ENCODE measurements at regions of chr19 and their contacts with region 1.

Region 1: GRCh38 chr19:38204096-38204495 is 19.9 kb downstream of the DPF1 start:
- DNase-seq: no peak
- ATAC-seq: no peak
- H3K4me3 ChIP-seq: no peak overlapping the region
- H3K4me3 Mint-ChIP-seq: no peak overlapping the region
- H3K27ac ChIP-seq: no peak overlapping the region
- H3K27ac Mint-ChIP-seq: no peak overlapping the region
- H3K4me1 ChIP-seq: no peaks in the 10 kb centered on the region
- H3K4me1 Mint-ChIP-seq: peaks cover 5 to 6% of the 10 kb centered on the region in 2 donors
- H3K27me3 ChIP-seq: peaks cover 6% of the 10 kb centered on the region
- H3K27me3 Mint-ChIP-seq: peaks cover 7 to 9% of the 10 kb centered on the region in 2 donors
- CTCF ChIP-seq: no peak

Region 2: GRCh38 chr19:37864501-37864900 is 339.6 kb before region 1 on chr19:
- intact Hi-C with region 1: no loop called
- DNase-seq: no peak
- ATAC-seq: no peak
- H3K4me3 ChIP-seq: no peak overlapping the region
- H3K4me3 Mint-ChIP-seq: no peak overlapping the region
- H3K27ac ChIP-seq: no peak overlapping the region
- H3K27ac Mint-ChIP-seq: no peak overlapping the region
- H3K4me1 ChIP-seq: no peaks in the 10 kb centered on the region
- H3K4me1 Mint-ChIP-seq: no peaks in the 10 kb centered on the region
- H3K27me3 ChIP-seq: peaks cover 2% of the 10 kb centered on the region
- H3K27me3 Mint-ChIP-seq: peaks cover 0 to 6% of the 10 kb centered on the region in 2 donors
- CTCF ChIP-seq: no peak

Region 3: DNA sequence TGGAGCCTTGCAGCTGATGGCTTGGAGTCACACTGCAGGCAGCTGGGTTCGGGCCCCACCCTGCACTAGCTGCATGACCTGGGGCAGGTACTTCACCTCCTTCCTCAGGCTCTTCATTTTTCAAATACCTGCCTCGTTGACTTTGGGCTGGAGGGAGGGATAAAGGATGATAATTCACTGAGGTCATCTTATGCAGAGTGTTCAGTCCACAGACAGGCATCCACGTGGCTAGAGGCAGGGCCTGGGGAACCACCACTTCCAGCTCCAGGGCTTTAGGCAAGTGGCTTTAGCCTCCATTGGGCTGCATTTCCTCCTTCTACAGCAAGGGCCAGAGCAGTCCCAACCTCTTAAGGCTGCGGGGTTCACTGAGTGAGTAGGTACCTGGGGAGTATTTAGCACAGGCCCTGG is 212.3 kb before region 1 on chr19:
- intact Hi-C with region 1: loop called (anchors 5 kb)
- DNase-seq: no peak
- ATAC-seq: no peak
- H3K4me3 ChIP-seq: no peak overlapping the region
- H3K4me3 Mint-ChIP-seq: no peak overlapping the region
- H3K27ac ChIP-seq: no peak overlapping the region
- H3K27ac Mint-ChIP-seq: no peak overlapping the region
- H3K4me1 ChIP-seq: peaks cover under 1% of the 10 kb centered on the region
- H3K4me1 Mint-ChIP-seq: peaks cover 16 to 32% of the 10 kb centered on the region in 2 donors
- H3K27me3 ChIP-seq: no peaks in the 10 kb centered on the region
- H3K27me3 Mint-ChIP-seq: no peaks in the 10 kb centered on the region
- CTCF ChIP-seq: no peak